Common myeloid progenitor, CD34-positive (primary cell): ENCODE measurements at regions of chr3 and their contacts with region 1.

Region 1: DNA sequence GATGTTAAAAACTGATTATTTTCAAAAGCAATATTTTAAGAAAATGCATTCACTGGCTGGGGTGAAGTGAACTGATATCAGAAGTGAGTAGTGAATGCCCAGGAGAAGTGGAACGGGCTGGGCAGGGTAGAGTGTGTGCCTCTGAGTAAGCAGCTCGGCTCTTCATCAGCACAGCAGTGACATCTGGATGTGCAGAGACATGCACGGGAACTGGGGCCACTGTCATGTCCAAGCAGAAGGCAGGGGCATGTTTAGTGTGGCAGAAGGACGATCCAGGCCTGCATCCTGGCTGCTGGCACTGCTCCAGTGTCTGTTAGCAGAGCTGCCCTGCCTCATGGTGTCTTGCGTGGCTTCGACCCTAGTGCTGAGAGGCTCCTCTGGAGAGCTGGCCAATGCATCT is 305.6 kb upstream of the LRRFIP2 start:
- DNase-seq: peak in 2 of 3 donors; percentile 36 to 56
- H3K4me3 ChIP-seq: no peak overlapping the region
- H3K27ac ChIP-seq: no peak overlapping the region
- H3K4me1 ChIP-seq: peaks cover 24 to 71% (median 45%) of the 10 kb centered on the region in 4 experiments
- H3K27me3 ChIP-seq: no peaks in the 10 kb centered on the region

Region 2: GRCh38 chr3:37466660-37467359 is 13.2 kb before region 1 on chr3:
- CTCF ChIA-PET with region 1: interaction called, 18 read pairs
- POLR2A ChIA-PET with region 1: interaction called, 3 read pairs
- DNase-seq: peak in 2 of 3 donors; percentile 51 to 60
- H3K4me3 ChIP-seq: peak overlapping the region in 1 of 7 experiments; percentile 12
- H3K27ac ChIP-seq: no peak overlapping the region
- H3K4me1 ChIP-seq: peaks cover 0 to 47% (median 17%) of the 10 kb centered on the region in 4 experiments
- H3K27me3 ChIP-seq: no peaks in the 10 kb centered on the region